ENCODE measurements at regions of chr17 and their contacts with region 1.

Region 1: GRCh38 chr17:40287494-40288369 is at the start of gene CDC6:
- DNase-seq: peak; percentile 98 to 99 (median 99)
- ATAC-seq: peak; percentile 98 to 99
- H3K4me3 ChIP-seq: peak within 1 kb of the TSS; percentile 53
- H3K27ac ChIP-seq: peak within 1 kb of the TSS; percentile 20
- H3K4me1 ChIP-seq: no peaks in the 10 kb centered on the region
- H3K27me3 ChIP-seq: no peaks in the 10 kb centered on the region
- total RNA-seq, gene CDC6: 1.0 to 1.8 (median 1.3) TPM

Region 2: GRCh38 chr17:40038882-40039513 is 248.7 kb before region 1 on chr17:
- intact Hi-C with region 1: loop called in 1 of 4 experiments (anchors 10 kb)
- DNase-seq: peak; percentile 77 to 88 (median 86)
- ATAC-seq: peak; percentile 92 to 96
- H3K4me3 ChIP-seq: no peak overlapping the region
- H3K27ac ChIP-seq: peak overlapping the region; percentile 87
- H3K4me1 ChIP-seq: peaks cover 3% of the 10 kb centered on the region
- H3K27me3 ChIP-seq: no peaks in the 10 kb centered on the region

Region 3: GRCh38 chr17:40203131-40203530 is 84.6 kb before region 1 on chr17:
- intact Hi-C with region 1: loop called in 3 of 4 experiments (anchors 2 to 10 kb)
- DNase-seq: no peak
- ATAC-seq: peak; percentile 55 to 79
- H3K4me3 ChIP-seq: no peak overlapping the region
- H3K27ac ChIP-seq: no peak overlapping the region
- H3K4me1 ChIP-seq: no peaks in the 10 kb centered on the region
- H3K27me3 ChIP-seq: no peaks in the 10 kb centered on the region

Region 4: GRCh38 chr17:40209404-40210093 is 78.2 kb before region 1 on chr17:
- intact Hi-C with region 1: loop called in 2 of 4 experiments (anchors 5 to 10 kb)
- DNase-seq: no peak
- ATAC-seq: no peak
- H3K4me3 ChIP-seq: no peak overlapping the region
- H3K27ac ChIP-seq: no peak overlapping the region
- H3K4me1 ChIP-seq: no peaks in the 10 kb centered on the region
- H3K27me3 ChIP-seq: no peaks in the 10 kb centered on the region